HEK293 (cell line): ENCODE measurements at regions of chr1 and their contacts with region 1.

Region 1: GRCh38 chr1:150829743-150830142 is 21.7 kb upstream of the CTSK start:
- H3K4me3 ChIP-seq: no peak overlapping the region
- H3K27ac ChIP-seq: no peak overlapping the region
- H3K4me1 ChIP-seq: no peaks in the 10 kb centered on the region
- CTCF ChIP-seq: no peak

Region 2: GRCh38 chr1:150804671-150805070 is 25.1 kb before region 1 on chr1:
- CTCF ChIA-PET with region 1: no interaction called
- POLR2A ChIA-PET with region 1: no interaction called
- H3K4me3 ChIP-seq: no peak overlapping the region
- H3K27ac ChIP-seq: no peak overlapping the region
- H3K4me1 ChIP-seq: no peaks in the 10 kb centered on the region
- CTCF ChIP-seq: no peak

Region 3: GRCh38 chr1:150846473-150847146 is 16.9 kb after region 1 on chr1:
- CTCF ChIA-PET with region 1: no interaction called
- POLR2A ChIA-PET with region 1: no interaction called
- H3K4me3 ChIP-seq: no peak overlapping the region
- H3K27ac ChIP-seq: no peak overlapping the region
- H3K4me1 ChIP-seq: no peaks in the 10 kb centered on the region
- CTCF ChIP-seq: no peak

Region 4: GRCh38 chr1:150876119-150876454 is 46.3 kb after region 1 on chr1:
- CTCF ChIA-PET with region 1: interaction called, 15 read pairs
- POLR2A ChIA-PET with region 1: no interaction called
- H3K4me3 ChIP-seq: peak overlapping the region; percentile 79
- H3K27ac ChIP-seq: peak overlapping the region; percentile 79
- H3K4me1 ChIP-seq: peaks cover 4% of the 10 kb centered on the region; the same call in 1 of the 2 replicates
- CTCF ChIP-seq: no peak

Region 5: GRCh38 chr1:150902356-150903140 is 72.8 kb after region 1 on chr1:
- CTCF ChIA-PET with region 1: no interaction called
- POLR2A ChIA-PET with region 1: no interaction called
- H3K4me3 ChIP-seq: no peak overlapping the region
- H3K27ac ChIP-seq: no peak overlapping the region
- H3K4me1 ChIP-seq: no peaks in the 10 kb centered on the region
- CTCF ChIP-seq: no peak

Region 6: GRCh38 chr1:151485685-151486255 is 656.0 kb after region 1 on chr1:
- CTCF ChIA-PET with region 1: no interaction called
- POLR2A ChIA-PET with region 1: no interaction called
- H3K4me3 ChIP-seq: no peak overlapping the region
- H3K27ac ChIP-seq: no peak overlapping the region
- H3K4me1 ChIP-seq: no peaks in the 10 kb centered on the region
- CTCF ChIP-seq: no peak